GM12878 (cell line): ENCODE measurements at regions of chr2 and their contacts with region 1.

Region 1: GRCh38 chr2:25586726-25587144 is 86.6 kb downstream of the DTNB start:
- DNase-seq: peak; percentile 92
- ATAC-seq: peak; percentile 93
- H3K4me3 ChIP-seq: no peak overlapping the region
- H3K27ac ChIP-seq: peak overlapping the region; percentile 41; the same call in 1 of the 2 replicates
- H3K4me1 ChIP-seq: peaks cover 38% of the 10 kb centered on the region
- H3K27me3 ChIP-seq: no peaks in the 10 kb centered on the region
- CTCF ChIP-seq: no peak
- EP300 ChIP-seq: peak; percentile 90 to 91
- POLR2A ChIP-seq: 0 out of 2 replicates have a peak, but pooled peaks have one; percentile 20
- RAD21 ChIP-seq: no peak; the same call in 1 of the 2 replicates

Region 2: DNA sequence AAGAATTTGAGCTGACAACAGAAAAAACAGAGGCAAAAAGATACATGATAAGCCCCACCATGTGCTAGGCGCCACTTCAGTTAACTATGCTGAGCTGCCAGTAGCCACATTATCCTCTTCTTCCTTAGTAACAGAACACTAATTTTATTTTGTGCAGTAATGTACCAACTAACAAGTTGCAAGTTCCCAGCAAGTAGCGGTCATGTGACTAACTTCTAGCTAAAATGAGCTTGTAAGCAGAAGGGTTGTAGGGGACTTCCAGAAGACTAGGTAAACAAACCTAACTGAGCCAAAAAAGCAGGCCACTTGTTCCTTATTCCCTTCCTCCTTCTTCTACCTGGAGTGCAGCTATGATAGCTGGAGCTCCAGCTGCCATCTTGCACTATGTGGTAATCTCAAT is 11.1 kb after region 1 on chr2:
- CTCF ChIA-PET with region 1: interaction called, 6 read pairs
- POLR2A ChIA-PET with region 1: interaction called, 4 read pairs
- RAD21 ChIA-PET with region 1: interaction called, 10 read pairs
- SMC1A ChIA-PET with region 1: interaction called, 27 read pairs
- in situ Hi-C with region 1: no loop called
- intact Hi-C with region 1: no loop called
- DNase-seq: no peak
- ATAC-seq: no peak; the same call in 2 of the 3 replicates
- H3K4me3 ChIP-seq: no peak overlapping the region
- H3K27ac ChIP-seq: no peak overlapping the region
- H3K4me1 ChIP-seq: peaks cover 12% of the 10 kb centered on the region
- H3K27me3 ChIP-seq: no peaks in the 10 kb centered on the region
- CTCF ChIP-seq: no peak
- EP300 ChIP-seq: no peak
- POLR2A ChIP-seq: no peak
- RAD21 ChIP-seq: no peak